Mammary epithelial cell (primary cell): ENCODE measurements at regions of chr1 and their contacts with region 1.

Region 1: DNA sequence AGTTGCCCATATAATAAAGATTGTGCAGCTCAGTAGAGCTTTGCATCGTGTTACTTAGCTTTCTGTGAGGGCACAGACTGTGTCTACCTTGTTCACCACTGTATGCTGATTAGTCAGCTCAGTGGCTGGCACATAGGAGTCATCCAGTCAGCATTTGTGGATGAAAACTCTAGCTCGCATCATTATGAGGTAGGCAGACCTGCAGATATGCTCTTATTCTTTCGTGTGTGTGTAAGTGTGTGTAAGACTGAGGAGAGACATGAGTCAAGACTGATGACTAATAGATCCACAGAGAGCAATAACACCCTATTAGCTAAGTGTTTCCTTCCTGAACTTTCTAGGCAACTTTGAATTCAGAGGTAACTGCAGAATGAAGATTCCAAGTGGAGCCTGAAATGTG is 17.1 kb downstream of the TTF2 start:
- DNase-seq: peak; percentile 98
- H3K4me3 ChIP-seq: no peak overlapping the region
- H3K27ac ChIP-seq: peak overlapping the region; percentile 65
- H3K4me1 ChIP-seq: peaks cover 17% of the 10 kb centered on the region
- H3K27me3 ChIP-seq: no peaks in the 10 kb centered on the region
- CTCF ChIP-seq: no peak

Region 2: DNA sequence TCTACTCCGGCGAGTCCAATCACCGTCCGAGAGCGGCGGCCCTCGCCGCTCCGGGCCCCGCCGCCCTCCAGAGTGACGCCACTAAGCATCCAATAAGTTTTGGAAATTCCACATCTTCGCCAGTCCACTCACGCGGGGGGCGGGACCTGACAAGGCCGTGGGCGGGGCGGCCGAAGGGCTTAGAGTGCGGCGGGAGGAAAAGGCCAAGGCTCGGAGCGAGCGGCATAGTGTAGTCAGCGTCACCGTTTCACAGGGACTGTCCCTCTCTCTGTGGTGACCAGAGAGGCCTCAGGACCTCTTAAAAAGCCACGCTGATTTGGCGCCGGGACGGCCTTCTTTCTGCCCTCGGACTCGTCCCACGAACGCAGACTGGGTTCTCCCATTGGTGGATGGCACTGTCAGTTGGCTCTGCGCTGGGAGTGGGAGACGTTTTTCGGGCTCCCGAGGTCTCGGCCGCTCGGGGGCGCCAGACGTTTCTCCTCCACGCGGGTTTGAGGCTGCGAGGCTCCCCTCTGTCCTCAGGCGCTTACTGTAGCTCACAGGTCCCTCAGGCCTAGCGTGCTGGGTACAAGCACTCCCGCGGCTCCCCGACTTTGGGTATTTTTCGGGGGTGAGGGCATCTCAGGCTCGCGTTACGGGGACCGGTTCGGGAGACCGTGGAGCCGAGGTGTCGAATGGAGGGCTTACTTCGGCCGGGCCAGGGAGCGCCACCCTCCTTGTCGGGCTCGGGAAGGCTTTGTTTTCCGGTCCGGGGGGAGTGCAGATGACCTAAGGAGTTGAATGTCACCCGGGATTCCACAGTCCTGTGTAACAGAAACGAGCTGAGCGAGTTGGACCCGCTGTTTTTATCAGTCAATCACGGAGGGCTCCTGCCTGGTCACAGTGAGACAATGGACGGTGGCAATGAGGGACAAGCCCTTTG is 44.8 kb after region 1 on chr1:
- CTCF ChIA-PET with region 1: no interaction called
- dilution Hi-C with region 1: no loop called
- in situ Hi-C with region 1: loop called in 1 of 2 experiments (anchors 5 kb)
- intact Hi-C with region 1: loop called (anchors 2 kb)
- DNase-seq: peak; percentile 97
- H3K4me3 ChIP-seq: peak overlapping the region; percentile 62 to 82 (median 66)
- H3K27ac ChIP-seq: peak overlapping the region; percentile 70
- H3K4me1 ChIP-seq: peaks cover 8% of the 10 kb centered on the region
- H3K27me3 ChIP-seq: no peaks in the 10 kb centered on the region
- CTCF ChIP-seq: peak; percentile 40 to 80

Region 3: GRCh38 chr1:117710710-117711109 is 633.4 kb after region 1 on chr1:
- CTCF ChIA-PET with region 1: no interaction called
- dilution Hi-C with region 1: no loop called
- in situ Hi-C with region 1: no loop called
- intact Hi-C with region 1: no loop called
- DNase-seq: no peak
- H3K4me3 ChIP-seq: no peak overlapping the region
- H3K27ac ChIP-seq: no peak overlapping the region
- H3K4me1 ChIP-seq: no peaks in the 10 kb centered on the region
- H3K27me3 ChIP-seq: no peaks in the 10 kb centered on the region
- CTCF ChIP-seq: peak; percentile 19 to 30